ENCODE measurements at regions of chr22 and their contacts with region 1.

Region 1: DNA sequence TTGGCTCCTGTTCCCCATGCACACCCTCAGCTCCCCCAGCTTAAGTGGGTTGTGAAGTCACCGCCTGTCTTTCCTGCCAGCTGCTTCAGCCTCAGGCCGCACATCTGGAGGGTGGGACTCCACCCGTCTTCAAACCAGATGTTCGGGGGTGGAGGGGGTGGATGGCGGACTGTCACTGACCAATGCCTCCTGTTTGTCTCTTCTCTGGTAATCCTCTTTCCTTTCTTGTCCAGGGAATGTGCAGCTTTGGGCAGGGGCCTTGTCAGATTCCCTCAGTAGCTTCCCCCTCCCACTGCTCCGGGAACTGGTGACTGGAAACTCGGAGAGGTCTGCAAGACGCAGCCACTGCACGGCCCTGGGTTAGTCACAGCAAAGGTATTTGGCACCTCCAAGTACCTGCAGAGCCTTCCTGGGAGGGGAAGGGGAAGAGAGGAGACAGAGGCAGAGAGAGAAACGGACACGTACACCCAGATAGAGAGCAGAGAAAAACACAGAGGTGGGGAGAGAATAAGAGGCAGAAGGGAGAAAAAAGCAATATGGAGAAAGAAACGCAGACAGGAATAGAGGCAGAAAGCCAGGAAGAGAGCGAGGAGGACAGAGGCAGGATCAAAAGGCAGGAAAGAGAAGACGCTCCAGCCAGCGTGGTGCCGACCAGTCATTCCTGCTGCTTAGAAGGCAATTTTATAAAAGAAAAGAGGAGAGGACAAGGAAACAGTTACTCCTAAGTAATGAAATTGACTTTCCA is 56.1 kb upstream of the TIMP3 start:
- DNase-seq: no peak
- H3K4me3 ChIP-seq: no peak overlapping the region
- H3K27ac ChIP-seq: no peak overlapping the region
- H3K27me3 ChIP-seq: no peaks in the 10 kb centered on the region
- CTCF ChIP-seq: no peak

Region 2: DNA sequence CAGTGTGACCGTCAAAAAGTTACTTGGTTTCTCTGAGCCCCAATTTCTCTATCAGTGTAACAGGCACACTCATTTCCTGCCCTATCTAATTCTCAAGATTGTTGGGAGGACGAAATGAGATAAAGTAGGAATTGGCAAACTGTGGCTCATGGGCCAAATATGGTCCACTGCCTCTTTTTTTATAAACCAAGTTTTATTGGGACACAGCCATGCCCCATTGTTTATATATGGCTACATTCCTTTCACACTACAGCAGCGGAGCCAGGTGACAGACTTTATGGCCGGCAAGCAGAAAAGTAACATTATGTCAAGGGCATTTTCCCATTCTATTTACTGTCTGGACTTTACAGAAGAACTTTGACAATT is 60.6 kb before region 1 on chr22:
- intact Hi-C with region 1: no loop called
- DNase-seq: no peak
- H3K4me3 ChIP-seq: no peak overlapping the region
- H3K27ac ChIP-seq: no peak overlapping the region
- H3K27me3 ChIP-seq: no peaks in the 10 kb centered on the region
- CTCF ChIP-seq: no peak

Region 3: GRCh38 chr22:32823024-32823730 is 77.8 kb after region 1 on chr22:
- intact Hi-C with region 1: loop called in 1 of 2 experiments (anchors 10 kb)
- DNase-seq: no peak
- H3K4me3 ChIP-seq: no peak overlapping the region
- H3K27ac ChIP-seq: no peak overlapping the region
- H3K27me3 ChIP-seq: no peaks in the 10 kb centered on the region
- CTCF ChIP-seq: peak in 23 of 56 donors; percentile 8 to 36 (median 20)